Endothelial cell of umbilical vein (primary cell): ENCODE measurements at regions of chr9 and their contacts with region 1.

Region 1: GRCh38 chr9:928362-929042 is 48.0 kb upstream of the DMRT3 start:
- DNase-seq: peak; percentile 4
- H3K4me3 ChIP-seq: no peak overlapping the region
- H3K27ac ChIP-seq: no peak overlapping the region
- H3K4me1 ChIP-seq: no peaks in the 10 kb centered on the region
- H3K27me3 ChIP-seq: no peaks in the 10 kb centered on the region
- CTCF ChIP-seq: peak; percentile 29 to 60
- POLR2A ChIP-seq: no peak

Region 2: GRCh38 chr9:917730-918129 is 10.8 kb before region 1 on chr9:
- CTCF ChIA-PET with region 1: interaction called, 11 read pairs
- POLR2A ChIA-PET with region 1: no interaction called
- dilution Hi-C with region 1: no loop called
- intact Hi-C with region 1: no loop called
- DNase-seq: no peak
- H3K4me3 ChIP-seq: no peak overlapping the region
- H3K27ac ChIP-seq: no peak overlapping the region
- H3K4me1 ChIP-seq: no peaks in the 10 kb centered on the region
- H3K27me3 ChIP-seq: no peaks in the 10 kb centered on the region
- CTCF ChIP-seq: no peak
- POLR2A ChIP-seq: no peak